ENCODE measurements at regions of chr2 and their contacts with region 1.

Region 1: DNA sequence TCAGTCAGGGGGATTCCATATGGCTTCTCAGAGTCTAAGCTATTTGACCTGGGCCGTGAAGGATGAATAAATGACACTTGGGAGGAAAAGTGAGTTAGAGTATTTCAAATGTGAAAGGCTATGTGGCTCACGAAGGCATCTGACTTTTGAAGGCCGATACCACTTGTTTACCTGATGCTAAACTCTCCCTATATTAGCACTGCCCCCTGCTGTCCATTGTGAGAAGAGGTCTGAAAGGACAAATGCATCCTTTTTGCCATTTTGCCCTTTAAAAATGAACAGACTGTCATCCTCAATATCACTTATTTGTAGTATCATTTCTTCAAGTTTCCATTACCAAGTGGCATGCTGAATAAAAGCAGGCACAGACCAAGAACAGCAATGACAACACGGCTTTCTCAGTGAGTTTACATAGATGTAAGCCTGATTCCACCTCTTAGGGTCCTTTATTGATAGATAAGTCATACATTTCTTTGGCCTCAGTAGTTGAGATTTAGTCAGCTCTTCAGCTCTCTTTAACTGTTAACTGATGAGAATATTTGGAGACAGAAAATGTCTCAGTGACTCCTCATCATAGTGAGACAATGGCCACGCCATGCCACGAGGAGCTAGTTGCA is 40.1 kb downstream of the DOCK10 start:
- DNase-seq: peak; percentile 86
- H3K4me3 ChIP-seq: no peak overlapping the region
- H3K27ac ChIP-seq: peak overlapping the region; percentile 64
- H3K4me1 ChIP-seq: peaks cover 24% of the 10 kb centered on the region
- CTCF ChIP-seq: peak; percentile 93

Region 2: GRCh38 chr2:224611938-224612337 is 390.2 kb before region 1 on chr2:
- CTCF ChIA-PET with region 1: interaction called, 3 read pairs
- POLR2A ChIA-PET with region 1: no interaction called
- intact Hi-C with region 1: loop called (anchors 2 kb)
- DNase-seq: peak; percentile 80
- H3K4me3 ChIP-seq: no peak overlapping the region
- H3K27ac ChIP-seq: no peak overlapping the region
- H3K4me1 ChIP-seq: peaks cover 10% of the 10 kb centered on the region
- CTCF ChIP-seq: peak; percentile 93

Region 3: DNA sequence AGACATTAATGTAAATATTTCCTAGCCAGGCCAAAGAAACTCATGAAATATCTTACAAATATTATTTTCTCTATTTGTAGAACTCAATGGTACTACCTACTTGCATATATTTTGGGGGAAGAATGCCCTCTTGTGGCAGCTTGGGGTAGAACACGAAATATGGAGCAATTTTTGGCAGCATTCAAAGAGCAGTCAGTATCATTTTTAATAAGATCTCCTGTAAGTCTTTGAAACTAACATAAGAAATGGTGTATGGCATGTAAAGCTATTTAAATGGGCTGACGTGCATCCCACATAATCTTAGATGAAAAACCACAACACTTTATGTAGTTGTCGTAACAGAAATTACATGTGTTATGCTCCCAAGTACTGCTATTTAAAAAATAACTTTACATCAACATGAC is 223.7 kb before region 1 on chr2:
- CTCF ChIA-PET with region 1: no interaction called
- POLR2A ChIA-PET with region 1: interaction called, 3 read pairs
- intact Hi-C with region 1: loop called (anchors 2 kb)
- DNase-seq: peak; percentile 73
- H3K4me3 ChIP-seq: no peak overlapping the region
- H3K27ac ChIP-seq: peak overlapping the region; percentile 0
- H3K4me1 ChIP-seq: peaks cover 31% of the 10 kb centered on the region
- CTCF ChIP-seq: peak; percentile 99

Region 4: DNA sequence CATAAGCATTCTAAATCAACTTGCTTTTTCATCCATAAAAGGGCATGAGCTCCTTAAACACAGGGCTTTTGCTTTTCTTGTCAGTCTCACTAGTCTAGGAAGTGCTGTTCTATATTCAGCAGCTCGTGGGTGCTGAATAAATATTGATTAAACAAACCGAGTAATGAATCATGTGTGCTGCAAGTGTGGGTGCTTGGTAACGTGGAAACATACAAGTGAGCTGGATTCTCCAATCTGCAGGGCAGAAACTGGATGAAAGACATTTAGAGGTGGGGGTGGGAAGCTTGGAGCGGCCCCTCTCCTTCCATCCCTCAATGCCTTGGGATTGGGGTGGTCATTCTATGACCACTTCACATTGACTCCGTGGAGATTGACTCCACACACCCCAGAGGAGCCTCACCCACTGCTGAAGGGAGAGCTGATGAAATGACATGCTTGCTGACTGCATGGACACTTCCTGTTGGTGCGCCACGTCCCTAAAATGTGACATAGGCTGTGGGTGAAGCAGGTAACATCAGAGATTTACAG is 74.4 kb before region 1 on chr2:
- CTCF ChIA-PET with region 1: no interaction called
- POLR2A ChIA-PET with region 1: interaction called, 3 read pairs
- intact Hi-C with region 1: loop called (anchors 1 kb)
- DNase-seq: no peak
- H3K4me3 ChIP-seq: no peak overlapping the region
- H3K27ac ChIP-seq: no peak overlapping the region
- H3K4me1 ChIP-seq: peaks cover 34% of the 10 kb centered on the region
- CTCF ChIP-seq: no peak

Region 5: GRCh38 chr2:224952936-224953657 is 49.0 kb before region 1 on chr2:
- CTCF ChIA-PET with region 1: interaction called, 5 read pairs
- POLR2A ChIA-PET with region 1: interaction called, 4 read pairs
- intact Hi-C with region 1: loop called (anchors 2 kb)
- DNase-seq: peak; percentile 91
- H3K4me3 ChIP-seq: peak overlapping the region; percentile 31
- H3K27ac ChIP-seq: peak overlapping the region; percentile 69
- H3K4me1 ChIP-seq: peaks cover 87% of the 10 kb centered on the region
- CTCF ChIP-seq: no peak

Region 6: DNA sequence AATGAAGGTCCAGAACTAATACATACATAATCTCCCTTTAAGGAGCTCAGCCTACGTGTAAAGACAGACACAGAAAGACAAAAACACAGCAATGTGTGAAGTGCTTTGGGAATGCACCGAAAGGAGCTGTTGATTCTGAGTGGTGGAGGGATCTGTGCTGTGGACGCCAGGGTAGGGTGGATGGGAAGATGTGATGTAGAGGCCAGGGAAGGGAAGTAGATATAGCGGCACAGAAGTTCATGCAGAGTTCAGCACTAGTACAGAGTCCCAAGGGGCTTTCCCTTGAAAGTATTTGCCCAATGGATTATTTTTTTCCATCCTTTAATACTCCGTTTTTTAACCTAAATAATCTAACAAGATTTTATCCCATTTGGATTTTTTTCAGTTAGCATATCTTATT is 72.2 kb after region 1 on chr2:
- CTCF ChIA-PET with region 1: no interaction called
- POLR2A ChIA-PET with region 1: no interaction called
- intact Hi-C with region 1: no loop called
- DNase-seq: no peak
- H3K4me3 ChIP-seq: no peak overlapping the region
- H3K27ac ChIP-seq: no peak overlapping the region
- H3K4me1 ChIP-seq: no peaks in the 10 kb centered on the region
- CTCF ChIP-seq: no peak

Region 7: DNA sequence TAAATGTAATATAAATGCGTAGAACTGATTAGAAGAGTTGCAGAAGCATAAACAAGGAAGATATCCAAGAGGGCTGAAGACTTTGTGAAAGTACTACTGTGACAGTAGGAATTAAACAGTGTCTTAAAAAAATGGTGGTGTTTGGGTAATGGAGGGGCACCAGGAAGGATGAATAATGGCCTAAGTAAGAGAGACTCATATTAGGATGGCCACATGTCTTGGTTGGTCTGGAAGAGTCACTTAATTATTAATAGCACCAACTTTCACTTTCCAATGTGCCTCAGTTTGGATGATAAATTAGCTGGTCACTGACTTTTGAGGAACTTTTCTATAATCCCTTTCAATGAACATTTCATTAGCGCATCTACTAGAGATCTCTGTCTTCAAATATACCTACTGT is 769.5 kb after region 1 on chr2:
- CTCF ChIA-PET with region 1: no interaction called
- POLR2A ChIA-PET with region 1: no interaction called
- intact Hi-C with region 1: no loop called
- DNase-seq: no peak
- H3K4me3 ChIP-seq: no peak overlapping the region
- H3K27ac ChIP-seq: no peak overlapping the region
- H3K4me1 ChIP-seq: no peaks in the 10 kb centered on the region
- CTCF ChIP-seq: no peak

Region 8: DNA sequence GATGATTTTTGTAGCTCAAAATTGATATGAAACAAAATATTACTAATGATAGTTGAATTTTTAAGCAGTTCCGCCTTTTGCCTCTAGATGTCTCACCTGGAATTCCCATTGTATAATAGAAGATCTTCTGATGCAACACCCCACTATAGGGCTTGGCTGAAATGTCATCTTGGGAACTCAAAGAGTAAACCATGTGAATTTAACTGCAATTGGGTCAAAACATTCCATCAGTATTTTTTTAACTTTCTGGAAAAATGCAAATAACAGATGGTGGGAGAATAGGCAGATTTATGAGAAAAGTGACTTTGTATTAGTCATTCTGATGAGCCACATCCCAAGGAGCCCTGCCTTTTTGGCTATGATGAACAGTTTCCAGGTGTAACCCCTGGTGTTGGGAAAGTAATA is 887.3 kb after region 1 on chr2:
- CTCF ChIA-PET with region 1: no interaction called
- POLR2A ChIA-PET with region 1: no interaction called
- intact Hi-C with region 1: no loop called
- DNase-seq: peak; percentile 45
- H3K4me3 ChIP-seq: no peak overlapping the region
- H3K27ac ChIP-seq: no peak overlapping the region
- H3K4me1 ChIP-seq: no peaks in the 10 kb centered on the region
- CTCF ChIP-seq: peak; percentile 88

Measured in OCI-LY7 (cell line).